Esophagus squamous epithelium (tissue), 5 donors: ENCODE measurements at regions of chr4 and their contacts with region 1.

Region 1: GRCh38 chr4:70901984-70902576 is at the start of gene MOB1B:
- DNase-seq: peak; percentile 11
- H3K4me3 ChIP-seq: peak within 1 kb of the TSS; percentile 82 to 96 (median 89)
- H3K27ac ChIP-seq: peak within 1 kb of the TSS; percentile 84 to 93 (median 92)
- H3K4me1 ChIP-seq: peaks cover 0 to 34% (median 8%) of the 10 kb centered on the region in 3 donors
- H3K27me3 ChIP-seq: no peaks in the 10 kb centered on the region
- CTCF ChIP-seq: peak in 5 of 6 experiments; percentile 21 to 32 (median 29)
- POLR2A ChIP-seq: peak in 1 of 4 donors; percentile 48
- total RNA-seq, gene MOB1B: 8.3 to 17.9 (median 11.6) TPM

Region 2: DNA sequence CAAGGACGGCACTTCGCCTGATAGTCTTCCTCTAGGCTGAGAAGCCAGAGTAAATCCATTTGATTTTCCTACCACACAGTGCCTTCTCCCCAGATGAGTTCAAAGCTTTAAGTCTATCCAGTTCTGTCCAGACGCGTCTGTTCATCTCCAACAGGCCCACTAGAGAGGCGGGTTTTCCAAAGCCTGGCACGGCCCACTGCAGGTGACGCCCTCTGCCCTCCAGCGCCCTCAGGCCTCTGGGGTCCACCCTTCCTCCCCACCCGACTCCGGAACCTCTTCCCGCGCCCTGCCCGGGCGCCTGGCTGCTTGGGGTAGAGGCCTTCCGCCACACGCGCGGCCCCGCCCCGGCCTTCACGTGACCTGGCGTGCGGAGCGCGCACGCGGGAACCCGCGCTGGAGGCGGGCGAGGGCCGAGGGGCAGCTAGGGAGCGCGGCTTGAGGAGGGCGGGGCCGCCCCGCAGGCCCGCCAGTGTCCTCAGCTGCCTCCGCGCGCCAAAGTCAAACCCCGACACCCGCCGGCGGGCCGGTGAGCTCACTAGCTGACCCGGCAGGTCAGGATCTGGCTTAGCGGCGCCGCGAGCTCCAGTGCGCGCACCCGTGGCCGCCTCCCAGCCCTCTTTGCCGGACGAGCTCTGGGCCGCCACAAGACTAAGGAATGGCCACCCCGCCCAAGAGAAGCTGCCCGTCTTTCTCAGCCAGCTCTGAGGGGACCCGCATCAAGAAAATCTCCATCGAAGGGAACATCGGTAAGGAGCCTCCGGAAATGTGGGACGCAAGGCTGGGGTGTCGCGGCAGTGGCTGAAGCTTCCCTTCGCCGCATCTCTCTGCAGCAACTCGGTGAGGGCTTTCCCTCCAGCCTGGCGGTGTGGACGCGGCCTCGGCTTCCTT is 91.3 kb after region 1 on chr4 and contains the start of gene DCK:
- intact Hi-C with region 1: loop called (anchors 10 kb)
- DNase-seq: peak; percentile 56
- H3K4me3 ChIP-seq: peak within 1 kb of the TSS; percentile 73 to 89 (median 79)
- H3K27ac ChIP-seq: peak within 1 kb of the TSS; percentile 85 to 93 (median 91)
- H3K4me1 ChIP-seq: peaks cover 0 to 58% (median 20%) of the 10 kb centered on the region in 3 donors
- H3K27me3 ChIP-seq: no peaks in the 10 kb centered on the region
- CTCF ChIP-seq: peak in 1 of 6 experiments; percentile 35
- POLR2A ChIP-seq: peak in 3 of 4 donors; percentile 64 to 89 (median 77)
- total RNA-seq, gene DCK: 8.5 to 22.1 (median 15.9) TPM